ENCODE measurements at regions of chr19 and their contacts with region 1.

Region 1: GRCh38 chr19:10292206-10292788 is 2.5 kb downstream of the ICAM5 start:
- DNase-seq: peak; percentile 99
- ATAC-seq: peak; percentile 73
- H3K4me3 Mint-ChIP-seq: peak overlapping the region; percentile 82
- H3K27ac Mint-ChIP-seq: no peak overlapping the region
- H3K4me1 Mint-ChIP-seq: peaks cover 39% of the 10 kb centered on the region
- H3K27me3 Mint-ChIP-seq: peaks cover 98% of the 10 kb centered on the region
- CTCF ChIP-seq: no peak

Region 2: GRCh38 chr19:10095948-10096621 is 196.2 kb before region 1 on chr19:
- CTCF ChIA-PET with region 1: no interaction called
- POLR2A ChIA-PET with region 1: no interaction called
- DNase-seq: peak; percentile 87
- ATAC-seq: peak; percentile 87
- H3K4me3 Mint-ChIP-seq: peak overlapping the region; percentile 42
- H3K27ac Mint-ChIP-seq: no peak overlapping the region
- H3K4me1 Mint-ChIP-seq: peaks cover 2% of the 10 kb centered on the region; the same call in 1 of the 2 replicates
- H3K27me3 Mint-ChIP-seq: peaks cover 62% of the 10 kb centered on the region
- CTCF ChIP-seq: no peak

Region 3: DNA sequence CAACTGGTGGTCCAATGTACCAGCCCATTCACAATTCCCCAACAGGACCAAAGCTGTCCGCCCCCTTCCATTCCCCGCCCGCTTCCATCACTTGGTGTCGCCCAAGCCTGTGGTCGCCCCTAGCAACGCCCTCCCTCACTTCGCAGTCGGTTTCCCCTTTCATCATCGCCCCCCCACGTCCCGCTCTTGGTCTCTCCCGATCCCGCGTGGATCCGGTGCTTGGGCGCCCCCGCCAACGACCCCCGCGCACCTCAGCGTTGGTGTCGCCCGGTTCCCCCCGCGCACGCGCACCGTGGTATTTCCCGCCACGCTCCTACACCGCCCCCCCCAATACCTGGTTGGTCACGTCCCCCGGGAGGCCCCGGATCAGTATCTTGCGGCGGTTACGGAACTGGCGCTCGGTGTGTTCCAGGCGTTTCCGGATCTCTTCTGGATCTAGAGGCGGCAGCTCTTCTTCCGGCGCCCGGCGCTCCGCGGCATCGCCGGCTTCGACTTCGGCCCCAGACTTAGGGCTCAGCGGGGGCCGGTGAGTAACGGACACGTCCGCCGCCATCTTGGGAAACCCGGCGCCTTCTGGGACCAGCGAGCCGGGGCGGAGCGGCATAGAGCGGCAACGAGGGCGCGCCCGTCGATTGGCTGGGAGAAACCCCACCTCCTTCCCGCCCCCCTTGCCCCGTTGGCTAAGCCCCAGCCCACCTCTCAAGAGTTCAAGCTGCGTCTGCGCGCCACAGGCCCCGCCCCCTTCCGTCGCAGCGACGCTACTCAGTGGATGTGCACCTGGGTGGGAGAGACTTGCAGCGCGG is 40.9 kb after region 1 on chr19 and contains the start of gene RAVER1:
- CTCF ChIA-PET with region 1: interaction called, 16 read pairs
- POLR2A ChIA-PET with region 1: interaction called, 7 read pairs
- DNase-seq: peak; percentile 98
- ATAC-seq: peak; percentile 91
- H3K4me3 Mint-ChIP-seq: peak within 1 kb of the TSS; percentile 93
- H3K27ac Mint-ChIP-seq: peak within 1 kb of the TSS; percentile 90
- H3K4me1 Mint-ChIP-seq: peaks cover 16% of the 10 kb centered on the region
- H3K27me3 Mint-ChIP-seq: peaks cover 10% of the 10 kb centered on the region
- CTCF ChIP-seq: no peak
- total RNA-seq, gene RAVER1: 85.8 to 87.4 TPM (median 86.9 TPM) in 3 replicates

Region 4: DNA sequence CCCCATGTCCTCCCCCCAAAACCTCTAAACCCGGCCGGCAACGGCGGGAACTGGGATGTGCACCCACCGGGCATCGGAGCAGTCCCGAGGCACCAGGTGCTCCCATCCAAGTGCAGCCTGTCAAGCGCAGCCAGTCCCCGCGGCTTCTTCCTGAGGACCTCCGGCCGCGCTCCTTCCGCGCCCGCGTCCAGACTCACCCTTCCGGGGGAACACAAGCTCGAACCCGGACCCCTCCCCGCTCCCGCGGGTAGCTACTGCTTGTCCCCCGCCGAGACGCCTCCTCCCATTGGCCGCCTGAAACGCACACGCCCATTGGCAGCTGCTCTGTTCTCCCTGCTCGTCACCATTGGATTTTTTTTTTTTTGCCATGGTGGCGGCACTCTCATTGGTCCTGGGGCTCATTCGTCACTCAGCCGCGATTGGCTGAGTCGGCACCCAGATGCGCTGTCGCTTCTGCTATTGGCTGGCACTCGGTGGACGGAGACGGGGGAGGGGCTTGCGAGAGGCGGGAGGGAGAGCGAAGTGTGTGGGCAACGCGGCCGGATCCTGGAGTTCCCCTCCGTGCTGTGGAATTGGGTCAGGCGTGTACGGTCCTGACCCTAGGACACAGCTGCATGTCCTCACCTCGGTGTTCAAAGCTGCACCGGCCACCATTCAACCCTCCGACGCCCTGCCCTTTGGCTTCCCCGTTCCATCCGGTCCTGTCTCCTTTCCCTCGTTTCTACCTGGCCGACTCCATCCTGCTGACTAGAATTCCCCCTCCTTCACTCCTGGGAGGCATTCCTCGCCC is 88.2 kb after region 1 on chr19 and contains the start of gene TYK2:
- CTCF ChIA-PET with region 1: interaction called, 15 read pairs
- POLR2A ChIA-PET with region 1: interaction called, 8 read pairs
- DNase-seq: peak; percentile 93
- ATAC-seq: peak; percentile 96
- H3K4me3 Mint-ChIP-seq: peak within 1 kb of the TSS; percentile 88
- H3K27ac Mint-ChIP-seq: peak within 1 kb of the TSS; percentile 97
- H3K4me1 Mint-ChIP-seq: peaks cover 9% of the 10 kb centered on the region
- H3K27me3 Mint-ChIP-seq: peaks cover 3% of the 10 kb centered on the region; the same call in 1 of the 2 replicates
- CTCF ChIP-seq: no peak
- total RNA-seq, gene TYK2: 63.8 to 66.4 TPM (median 65.1 TPM) in 3 replicates

Region 5: DNA sequence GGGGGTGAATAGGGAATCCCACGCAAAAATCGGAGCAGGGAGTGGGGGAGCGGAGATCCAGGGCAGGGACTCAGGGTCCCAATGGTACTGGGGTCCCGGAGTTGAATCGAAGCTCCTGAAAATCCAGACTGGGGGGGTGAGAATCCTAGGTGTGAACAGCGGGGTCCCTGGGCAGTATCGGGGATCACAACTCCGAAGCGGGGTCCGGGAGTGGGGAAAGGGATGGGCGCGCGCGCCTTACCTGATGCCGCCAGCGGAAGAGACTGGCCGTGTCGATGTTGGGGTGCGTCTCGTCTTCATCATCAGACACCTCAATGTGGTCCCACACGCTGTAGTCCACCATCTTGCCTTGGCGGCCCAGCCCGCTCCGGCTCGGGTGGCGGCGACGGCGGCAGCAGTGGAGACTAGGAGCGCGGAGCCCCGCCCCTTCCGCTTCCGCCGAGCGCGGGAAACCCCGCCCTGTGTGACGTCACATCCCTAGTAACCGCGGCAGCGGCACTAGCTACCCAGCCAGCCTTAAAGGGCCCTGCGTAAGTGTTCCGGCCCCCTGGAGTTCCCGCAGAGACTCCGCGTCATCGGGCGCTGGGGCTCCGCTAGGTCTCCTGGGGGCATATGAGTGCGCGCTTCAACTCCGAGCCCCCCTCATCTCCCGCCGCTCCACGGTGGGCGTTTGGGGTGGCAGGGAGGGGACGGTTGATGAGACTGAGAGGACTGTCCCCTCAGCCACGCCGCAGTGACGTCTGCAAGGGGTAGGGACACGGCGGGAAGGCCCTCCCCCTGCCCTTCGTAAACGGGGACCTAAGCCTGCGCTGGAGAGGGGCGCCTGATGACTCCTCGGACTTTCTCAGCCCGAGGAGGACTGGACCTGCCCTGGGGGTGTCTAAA is 111.1 kb after region 1 on chr19 and contains the start of gene CDC37:
- CTCF ChIA-PET with region 1: interaction called, 13 read pairs
- POLR2A ChIA-PET with region 1: no interaction called
- DNase-seq: peak; percentile 98
- ATAC-seq: peak; percentile 79
- H3K4me3 Mint-ChIP-seq: peak within 1 kb of the TSS; percentile 96
- H3K27ac Mint-ChIP-seq: peak within 1 kb of the TSS; percentile 89
- H3K4me1 Mint-ChIP-seq: peaks cover 19% of the 10 kb centered on the region
- H3K27me3 Mint-ChIP-seq: peaks cover 40% of the 10 kb centered on the region
- CTCF ChIP-seq: no peak
- total RNA-seq, gene CDC37: 163 to 204 TPM (median 164 TPM) in 3 replicates